Posterior vena cava (tissue), 2 donors: ENCODE measurements at regions of chr17 and their contacts with region 1.

Region 1: DNA sequence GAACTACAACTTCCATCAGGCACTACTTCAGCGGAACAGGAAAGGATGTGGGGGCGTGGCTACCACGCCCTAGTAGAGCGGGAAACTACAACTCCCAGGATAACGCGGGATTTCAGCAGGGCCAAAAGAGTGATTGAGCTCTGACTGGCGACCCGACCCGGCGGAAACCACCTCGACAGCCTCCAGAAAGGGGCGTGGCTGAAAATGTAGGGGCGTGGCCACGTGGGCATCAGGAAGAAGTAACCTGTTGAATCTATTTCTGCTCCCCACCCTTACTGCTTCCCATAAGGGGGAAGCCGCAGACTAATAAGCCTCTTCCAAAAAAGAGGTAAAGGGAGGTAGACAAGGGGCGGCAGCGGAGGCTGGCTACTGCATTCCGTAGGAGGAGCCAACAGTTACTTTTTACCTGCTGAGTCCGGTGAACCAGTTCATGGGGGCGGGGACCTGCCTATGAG is at the start of gene TMEM102:
- DNase-seq: peak; percentile 97
- total RNA-seq, gene TMEM102: 1.8 to 3.0 TPM

Region 2: DNA sequence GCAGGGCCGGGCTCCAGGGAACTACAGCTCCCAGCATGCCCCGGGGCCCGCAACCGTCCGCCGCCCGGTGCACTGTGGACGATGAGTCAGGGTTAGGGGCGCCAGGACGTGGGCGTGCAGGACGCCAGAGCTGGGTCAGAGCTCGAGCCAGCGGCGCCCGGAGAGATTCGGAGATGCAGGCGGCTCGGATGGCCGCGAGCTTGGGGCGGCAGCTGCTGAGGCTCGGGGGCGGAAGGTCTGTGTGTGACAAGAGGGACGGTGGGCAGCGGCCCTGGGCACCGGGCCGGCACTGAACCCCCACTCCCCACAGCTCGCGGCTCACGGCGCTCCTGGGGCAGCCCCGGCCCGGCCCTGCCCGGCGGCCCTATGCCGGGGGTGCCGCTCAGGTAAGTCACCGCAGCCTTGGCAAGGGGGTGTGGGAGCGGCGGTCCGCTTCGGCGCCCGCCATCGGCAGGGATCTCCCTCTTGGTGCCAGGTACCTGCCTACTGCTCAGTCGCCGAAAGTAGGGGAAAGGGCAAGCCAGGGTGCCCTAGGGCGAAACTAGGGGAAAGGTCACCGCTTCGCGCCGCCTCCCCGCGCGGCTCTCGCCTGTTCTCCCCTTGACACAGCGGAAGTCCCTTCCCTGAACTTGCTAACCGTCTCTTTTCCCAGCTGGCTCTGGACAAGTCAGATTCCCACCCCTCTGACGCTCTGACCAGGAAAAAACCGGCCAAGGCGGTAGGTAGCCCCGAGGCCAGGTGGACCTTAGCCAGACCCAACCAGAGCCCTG is 215.3 kb before region 1 on chr17 and contains the starts of genes ACADVL and DLG4:
- intact Hi-C with region 1: no loop called
- DNase-seq: peak; percentile 99
- total RNA-seq, gene ACADVL: 444 to 567 TPM
- total RNA-seq, gene DLG4: 20.8 to 21.2 TPM

Region 3: GRCh38 chr17:7484919-7485377 is 49.7 kb after region 1 on chr17:
- intact Hi-C with region 1: loop called in 1 of 2 experiments (anchors 5 kb)
- DNase-seq: no peak

Region 4: GRCh38 chr17:7561028-7561575 is 125.9 kb after region 1 on chr17:
- intact Hi-C with region 1: loop called in 1 of 2 experiments (anchors 10 kb)
- DNase-seq: peak; percentile 97

Region 5: GRCh38 chr17:7818746-7819645 is 383.7 kb after region 1 on chr17:
- intact Hi-C with region 1: no loop called
- DNase-seq: no peak